ENCODE measurements at regions of chr17 and their contacts with region 1.

Region 1: GRCh38 chr17:29807520-29808351 is 122.3 kb downstream of the SSH2 start:
- DNase-seq: peak; percentile 17 to 82 (median 60)
- ATAC-seq: peak; percentile 73 to 85 (median 78)
- H3K4me3 ChIP-seq: no peak overlapping the region
- H3K4me3 Mint-ChIP-seq: no peak overlapping the region
- H3K27ac ChIP-seq: no peak overlapping the region
- H3K27ac Mint-ChIP-seq: peak overlapping the region in 1 of 2 donors; percentile 2
- H3K4me1 ChIP-seq: peaks cover 12 to 20% of the 10 kb centered on the region in 2 experiments
- H3K4me1 Mint-ChIP-seq: peaks cover 23 to 26% (median 26%) of the 10 kb centered on the region in 3 donors
- H3K27me3 ChIP-seq: no peaks in the 10 kb centered on the region
- H3K27me3 Mint-ChIP-seq: no peaks in the 10 kb centered on the region

Region 2: GRCh38 chr17:28008542-28008941 is 1799.2 kb before region 1 on chr17:
- CTCF ChIA-PET with region 1: no interaction called
- POLR2A ChIA-PET with region 1: interaction called in 1 of 2 experiments, 12 read pairs
- DNase-seq: no peak
- ATAC-seq: no peak
- H3K4me3 ChIP-seq: no peak overlapping the region
- H3K4me3 Mint-ChIP-seq: no peak overlapping the region
- H3K27ac ChIP-seq: no peak overlapping the region
- H3K27ac Mint-ChIP-seq: no peak overlapping the region
- H3K4me1 ChIP-seq: no peaks in the 10 kb centered on the region
- H3K4me1 Mint-ChIP-seq: no peaks in the 10 kb centered on the region
- H3K27me3 ChIP-seq: peaks cover 0 to 5% of the 10 kb centered on the region in 2 experiments
- H3K27me3 Mint-ChIP-seq: peaks cover 7 to 22% of the 10 kb centered on the region in 2 donors

Region 3: DNA sequence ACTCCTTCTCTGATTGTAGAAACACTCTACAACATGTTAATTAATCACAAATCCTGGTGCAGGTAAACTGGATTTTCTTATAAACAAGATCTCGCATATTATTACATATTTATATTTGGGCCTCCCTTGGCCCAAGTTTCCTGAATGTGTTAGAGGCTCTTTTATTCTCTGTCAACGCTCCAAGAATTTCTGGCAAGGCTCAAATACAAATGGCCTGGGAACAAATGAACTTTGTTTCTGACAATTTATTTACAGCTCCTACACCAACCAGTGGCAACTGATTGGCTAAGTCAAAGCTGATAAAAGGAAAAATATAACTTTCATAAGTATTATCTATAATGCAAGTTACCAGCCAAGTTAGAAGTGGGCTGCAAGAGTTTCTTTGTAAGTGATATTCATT is 120.1 kb before region 1 on chr17:
- CTCF ChIA-PET with region 1: interaction called in 1 of 2 experiments, 11 read pairs
- POLR2A ChIA-PET with region 1: no interaction called
- DNase-seq: no peak
- ATAC-seq: no peak
- H3K4me3 ChIP-seq: no peak overlapping the region
- H3K4me3 Mint-ChIP-seq: no peak overlapping the region
- H3K27ac ChIP-seq: no peak overlapping the region
- H3K27ac Mint-ChIP-seq: peak overlapping the region in 1 of 2 donors; percentile 12
- H3K4me1 ChIP-seq: peaks cover 0 to 6% of the 10 kb centered on the region in 2 experiments
- H3K4me1 Mint-ChIP-seq: peaks cover 25 to 29% (median 27%) of the 10 kb centered on the region in 3 donors
- H3K27me3 ChIP-seq: no peaks in the 10 kb centered on the region
- H3K27me3 Mint-ChIP-seq: no peaks in the 10 kb centered on the region

Region 4: GRCh38 chr17:29847527-29848400 is 40.0 kb after region 1 on chr17:
- CTCF ChIA-PET with region 1: no interaction called
- POLR2A ChIA-PET with region 1: no interaction called
- DNase-seq: no peak
- ATAC-seq: no peak
- H3K4me3 ChIP-seq: no peak overlapping the region
- H3K4me3 Mint-ChIP-seq: no peak overlapping the region
- H3K27ac ChIP-seq: no peak overlapping the region
- H3K27ac Mint-ChIP-seq: no peak overlapping the region
- H3K4me1 ChIP-seq: no peaks in the 10 kb centered on the region
- H3K4me1 Mint-ChIP-seq: peaks cover 0 to 6% (median 5%) of the 10 kb centered on the region in 3 donors
- H3K27me3 ChIP-seq: no peaks in the 10 kb centered on the region
- H3K27me3 Mint-ChIP-seq: no peaks in the 10 kb centered on the region

Region 5: GRCh38 chr17:29867643-29868181 is 60.0 kb after region 1 on chr17:
- CTCF ChIA-PET with region 1: interaction called, 4 to 11 read pairs
- POLR2A ChIA-PET with region 1: no interaction called
- DNase-seq: peak in 1 of 35 experiments; percentile 22
- ATAC-seq: no peak
- H3K4me3 ChIP-seq: no peak overlapping the region
- H3K4me3 Mint-ChIP-seq: no peak overlapping the region
- H3K27ac ChIP-seq: no peak overlapping the region
- H3K27ac Mint-ChIP-seq: no peak overlapping the region
- H3K4me1 ChIP-seq: peaks cover 3 to 6% of the 10 kb centered on the region in 2 experiments
- H3K4me1 Mint-ChIP-seq: peaks cover 24 to 46% (median 28%) of the 10 kb centered on the region in 3 donors
- H3K27me3 ChIP-seq: no peaks in the 10 kb centered on the region
- H3K27me3 Mint-ChIP-seq: no peaks in the 10 kb centered on the region

Region 6: DNA sequence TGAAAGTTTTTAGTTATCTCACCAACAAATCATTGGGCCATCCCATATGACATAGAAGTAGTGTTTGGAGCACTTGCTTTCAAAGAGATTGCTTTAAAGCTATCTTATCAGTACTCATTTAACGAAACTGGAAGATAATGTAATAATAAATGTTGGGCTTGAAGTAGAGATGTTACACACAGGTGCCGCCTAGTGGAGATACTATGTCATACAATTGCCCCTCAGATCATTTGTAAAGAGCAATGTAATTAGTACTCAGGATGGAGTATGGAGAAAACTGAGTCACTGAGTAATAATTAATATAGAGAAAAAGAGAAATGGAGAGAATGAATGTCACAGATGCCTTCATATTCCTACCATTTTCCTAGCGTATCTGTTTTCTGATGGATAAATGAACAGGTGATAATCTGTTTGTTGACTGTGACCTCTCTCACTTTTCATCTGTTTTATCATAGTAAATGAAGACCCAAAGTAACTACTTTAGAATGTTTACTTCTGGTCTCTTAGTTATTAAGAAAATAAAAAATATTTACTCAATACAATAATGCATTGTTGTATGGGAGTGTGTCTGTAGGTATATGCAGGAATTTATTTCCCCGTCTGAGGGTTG is 214.1 kb after region 1 on chr17:
- CTCF ChIA-PET with region 1: interaction called in 1 of 2 experiments, 29 read pairs
- POLR2A ChIA-PET with region 1: no interaction called
- DNase-seq: peak in 27 of 35 experiments; percentile 1 to 69 (median 21)
- ATAC-seq: peak in 2 of 4 experiments; percentile 61 to 62
- H3K4me3 ChIP-seq: no peak overlapping the region
- H3K4me3 Mint-ChIP-seq: no peak overlapping the region
- H3K27ac ChIP-seq: no peak overlapping the region
- H3K27ac Mint-ChIP-seq: no peak overlapping the region
- H3K4me1 ChIP-seq: no peaks in the 10 kb centered on the region
- H3K4me1 Mint-ChIP-seq: peaks cover 0 to 1% (median 1%) of the 10 kb centered on the region in 3 donors
- H3K27me3 ChIP-seq: no peaks in the 10 kb centered on the region
- H3K27me3 Mint-ChIP-seq: peaks cover 0 to 4% of the 10 kb centered on the region in 2 donors

Region 7: DNA sequence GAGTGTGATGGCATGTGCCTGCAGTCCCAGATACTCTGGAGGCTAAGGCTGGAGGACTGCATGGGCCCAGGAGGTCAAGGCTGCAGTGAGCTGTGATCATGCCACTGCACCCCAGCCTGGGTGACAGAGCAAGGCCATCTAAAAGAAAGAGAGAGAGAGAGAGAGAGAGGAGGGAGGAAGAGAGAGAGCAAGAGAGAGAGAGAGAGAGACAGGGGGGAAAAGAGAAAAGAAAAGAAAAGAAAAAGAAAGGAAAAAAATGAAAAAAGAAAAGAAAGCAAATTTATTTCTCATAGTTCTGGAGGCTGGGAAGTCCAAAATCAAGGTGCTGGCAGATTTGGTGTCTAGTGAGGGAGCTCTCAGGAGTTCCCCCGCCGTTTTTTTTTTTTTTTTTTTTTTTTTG is 1196.4 kb after region 1 on chr17:
- CTCF ChIA-PET with region 1: interaction called in 1 of 2 experiments, 18 read pairs
- POLR2A ChIA-PET with region 1: no interaction called
- DNase-seq: no peak
- ATAC-seq: no peak
- H3K4me3 ChIP-seq: no peak overlapping the region
- H3K4me3 Mint-ChIP-seq: no peak overlapping the region
- H3K27ac ChIP-seq: no peak overlapping the region
- H3K27ac Mint-ChIP-seq: no peak overlapping the region
- H3K4me1 ChIP-seq: peaks cover 0 to 11% of the 10 kb centered on the region in 2 experiments
- H3K4me1 Mint-ChIP-seq: peaks cover 7 to 13% (median 10%) of the 10 kb centered on the region in 3 donors
- H3K27me3 ChIP-seq: peaks cover 0 to 3% of the 10 kb centered on the region in 2 experiments
- H3K27me3 Mint-ChIP-seq: peaks cover 0 to 4% of the 10 kb centered on the region in 2 donors

Measured in T-cell (primary cell).